GM10248 (cell line): ENCODE measurements at regions of chr3 and their contacts with region 1.

Region 1: GRCh38 chr3:33787328-33788009 is 11.0 kb upstream of the PDCD6IP start:
- DNase-seq: peak; percentile 66
- CTCF ChIP-seq: peak; percentile 85

Region 2: DNA sequence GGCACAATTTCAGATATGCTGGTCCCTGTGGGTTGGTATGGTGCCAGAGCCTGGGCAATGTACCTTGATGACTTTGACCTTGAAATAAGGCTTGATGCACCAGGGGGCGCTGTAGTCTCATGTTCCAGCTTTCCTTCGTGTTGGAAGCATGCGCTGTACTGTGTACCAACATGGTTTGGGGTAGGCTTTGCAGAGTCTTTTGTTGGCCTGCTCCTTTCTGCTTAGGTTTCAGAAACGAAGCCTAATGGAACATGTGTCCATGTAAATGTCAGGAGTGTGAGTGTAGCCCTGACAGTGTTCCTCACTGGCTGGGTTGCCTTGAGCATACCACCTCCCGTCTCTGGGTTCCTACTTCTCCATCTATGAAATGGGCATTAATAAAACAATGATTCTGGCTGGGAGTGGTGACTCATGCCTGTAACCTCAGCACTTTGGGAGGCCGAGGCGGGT is 839.7 kb before region 1 on chr3:
- CTCF ChIA-PET with region 1: interaction called, 16 read pairs
- POLR2A ChIA-PET with region 1: no interaction called
- DNase-seq: peak; percentile 64
- CTCF ChIP-seq: peak; percentile 73

Region 3: GRCh38 chr3:33372218-33373081 is 415.0 kb before region 1 on chr3:
- CTCF ChIA-PET with region 1: interaction called, 14 read pairs
- POLR2A ChIA-PET with region 1: no interaction called
- DNase-seq: peak; percentile 56
- CTCF ChIP-seq: peak; percentile 85

Region 4: DNA sequence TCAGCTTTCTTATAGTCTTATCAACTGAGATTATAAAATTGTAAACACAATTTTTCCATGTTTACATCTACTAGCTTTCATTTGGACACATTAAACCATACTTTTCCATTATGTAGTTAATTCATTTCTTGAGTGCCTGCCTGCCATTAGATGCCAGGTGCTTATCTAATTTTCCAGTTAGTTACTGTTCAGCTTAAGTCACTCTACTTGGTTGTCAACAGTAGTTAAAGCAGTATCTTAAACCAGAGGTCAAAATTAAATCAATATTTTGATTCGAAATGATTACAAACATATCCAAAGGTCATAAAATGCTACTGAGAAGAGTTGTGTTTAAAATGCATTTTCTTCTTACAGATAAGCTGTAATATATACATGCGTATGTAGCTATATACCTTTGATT is 291.0 kb before region 1 on chr3:
- CTCF ChIA-PET with region 1: no interaction called
- POLR2A ChIA-PET with region 1: no interaction called
- DNase-seq: no peak
- CTCF ChIP-seq: no peak

Region 5: GRCh38 chr3:33629219-33629618 is 158.2 kb before region 1 on chr3:
- CTCF ChIA-PET with region 1: interaction called, 51 read pairs
- POLR2A ChIA-PET with region 1: no interaction called
- DNase-seq: no peak
- CTCF ChIP-seq: no peak

Region 6: GRCh38 chr3:33658991-33659848 is 128.2 kb before region 1 on chr3:
- CTCF ChIA-PET with region 1: interaction called, 10 read pairs
- POLR2A ChIA-PET with region 1: no interaction called
- DNase-seq: peak; percentile 60
- CTCF ChIP-seq: no peak

Region 7: GRCh38 chr3:33749546-33750210 is 37.8 kb before region 1 on chr3:
- CTCF ChIA-PET with region 1: interaction called, 20 read pairs
- POLR2A ChIA-PET with region 1: no interaction called
- DNase-seq: no peak
- CTCF ChIP-seq: no peak

Region 8: DNA sequence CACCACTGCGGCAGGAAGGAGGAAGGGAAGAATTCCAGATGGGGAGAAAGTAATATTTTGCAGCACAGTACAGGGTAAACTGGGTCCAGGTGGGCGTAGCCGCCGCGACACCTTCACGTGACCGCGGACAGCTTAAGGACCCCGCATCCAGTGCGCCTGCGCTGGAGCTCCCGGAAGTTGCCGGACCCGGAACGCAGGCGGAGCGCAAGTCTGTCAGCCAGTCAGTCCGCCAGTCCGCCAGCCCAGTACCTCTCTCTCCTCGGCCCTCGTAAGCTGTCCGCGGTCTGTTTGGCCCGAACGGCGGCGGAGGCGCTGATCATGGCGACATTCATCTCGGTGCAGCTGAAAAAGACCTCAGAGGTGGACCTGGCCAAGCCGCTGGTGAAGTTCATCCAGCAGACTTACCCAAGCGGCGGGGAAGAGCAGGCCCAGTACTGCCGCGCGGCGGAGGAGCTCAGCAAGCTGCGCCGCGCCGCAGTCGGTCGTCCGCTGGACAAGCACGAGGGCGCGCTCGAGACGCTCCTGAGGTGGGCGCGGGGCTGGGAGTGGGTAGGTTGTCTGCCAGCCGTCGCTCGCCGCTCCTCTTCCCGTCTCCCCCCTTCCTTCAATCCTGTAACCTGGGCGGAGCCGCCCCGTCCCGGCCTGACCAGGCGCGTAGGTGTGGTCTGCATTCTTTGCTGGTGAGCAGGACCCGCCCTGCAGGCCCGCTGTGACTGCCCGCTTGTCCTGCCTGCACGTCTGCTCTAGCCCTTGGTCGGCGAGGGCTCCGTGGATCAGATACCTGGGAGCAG is 11.1 kb after region 1 on chr3 and contains the start of gene PDCD6IP:
- CTCF ChIA-PET with region 1: interaction called, 60 read pairs
- POLR2A ChIA-PET with region 1: no interaction called
- DNase-seq: peak; percentile 93
- CTCF ChIP-seq: peak; percentile 12

Region 9: GRCh38 chr3:33833408-33834095 is 46.1 kb after region 1 on chr3:
- CTCF ChIA-PET with region 1: no interaction called
- POLR2A ChIA-PET with region 1: no interaction called
- DNase-seq: peak; percentile 9
- CTCF ChIP-seq: no peak

Region 10: DNA sequence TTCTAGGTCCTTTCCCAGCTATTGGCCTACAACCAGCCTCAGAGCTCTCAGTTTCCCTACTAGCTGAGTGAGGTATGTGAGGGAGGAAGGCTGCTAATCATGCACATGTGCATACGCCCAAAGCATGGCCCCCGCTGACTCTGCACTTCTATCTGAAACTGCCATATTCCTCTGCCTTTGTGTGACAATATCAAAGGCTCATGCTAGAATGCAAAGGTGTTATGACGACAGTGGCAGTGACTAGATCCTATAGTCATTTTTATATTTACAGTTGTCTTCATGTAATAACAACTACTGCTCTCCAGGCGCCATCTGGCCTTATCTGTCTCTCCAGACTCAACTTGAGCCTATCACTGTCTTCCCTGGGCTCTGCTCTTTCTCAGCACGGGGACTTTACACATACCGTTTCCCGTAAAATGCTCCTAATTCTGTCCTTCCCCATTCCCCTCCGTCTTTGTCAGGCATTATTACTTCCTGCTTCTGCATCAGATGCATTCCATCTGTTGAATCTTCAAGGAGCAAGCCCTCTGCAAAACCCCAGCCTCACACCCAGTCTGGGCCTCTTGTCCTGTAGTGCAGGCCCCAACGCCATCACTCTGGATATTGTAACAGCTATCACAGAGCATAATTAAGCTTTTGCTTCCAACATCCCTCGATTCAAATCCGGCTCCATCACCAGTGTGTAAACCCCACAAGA is 113.5 kb after region 1 on chr3:
- CTCF ChIA-PET with region 1: no interaction called
- POLR2A ChIA-PET with region 1: no interaction called
- DNase-seq: no peak
- CTCF ChIP-seq: no peak

Region 11: DNA sequence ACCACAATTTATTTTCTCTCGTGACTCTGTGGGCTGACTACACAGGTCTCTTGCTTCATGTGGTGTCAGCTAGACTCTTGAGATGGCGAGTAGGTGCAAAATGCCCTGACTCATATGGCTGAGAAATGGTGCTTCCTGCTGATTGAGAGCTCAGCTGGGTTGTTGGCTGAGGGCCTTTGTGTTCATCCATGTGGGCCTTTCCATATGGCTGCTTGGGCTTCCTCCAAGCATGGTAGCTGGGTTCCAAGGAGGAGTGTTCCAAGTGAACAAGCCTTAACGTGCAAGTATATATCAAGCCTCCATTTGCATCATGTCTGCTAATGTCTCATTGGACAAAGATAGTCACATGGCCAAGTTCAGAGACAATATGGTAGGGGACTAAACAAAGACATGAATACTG is 174.9 kb after region 1 on chr3:
- CTCF ChIA-PET with region 1: no interaction called
- POLR2A ChIA-PET with region 1: no interaction called
- DNase-seq: no peak
- CTCF ChIP-seq: no peak